ENCODE measurements at regions of chr2 and their contacts with region 1.

Region 1: DNA sequence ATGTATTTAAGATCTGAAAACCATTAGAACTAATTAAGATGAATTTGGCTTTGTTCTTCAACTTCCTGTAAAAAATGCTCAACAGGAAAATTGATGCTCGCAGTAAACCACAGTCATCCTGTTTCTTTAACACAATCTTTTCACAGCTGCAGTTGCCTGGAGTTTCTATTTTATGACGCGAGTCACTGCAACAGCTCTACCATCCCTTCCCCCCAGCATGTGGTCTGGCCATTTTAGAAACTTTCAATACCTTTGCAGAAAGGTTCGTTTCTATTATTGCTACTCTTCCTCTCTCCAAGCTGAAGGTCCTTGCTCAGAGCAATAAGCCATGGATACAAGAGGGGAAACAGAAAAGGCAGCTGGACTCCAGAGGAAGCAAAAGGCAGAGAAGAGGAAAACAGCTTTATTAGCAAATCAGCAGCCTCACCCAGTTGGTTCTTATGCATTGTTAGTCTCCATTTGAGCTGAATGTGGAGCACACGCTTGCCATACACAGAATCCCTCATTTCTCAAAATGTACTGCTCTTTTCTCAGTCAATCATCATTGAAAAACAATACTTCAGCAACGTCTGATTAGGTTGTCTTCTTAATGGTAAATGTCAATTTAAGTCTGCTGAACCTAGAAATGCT is 3.9 kb downstream of the WIPF1 start:
- DNase-seq: peak; percentile 80
- ATAC-seq: peak; percentile 67
- H3K4me3 Mint-ChIP-seq: peak overlapping the region; percentile 70
- H3K27ac Mint-ChIP-seq: peak overlapping the region; percentile 97
- H3K4me1 Mint-ChIP-seq: peaks cover 63% of the 10 kb centered on the region
- H3K27me3 Mint-ChIP-seq: no peaks in the 10 kb centered on the region

Region 2: GRCh38 chr2:174492963-174493431 is 100.7 kb before region 1 on chr2:
- CTCF ChIA-PET with region 1: interaction called, 4 read pairs
- POLR2A ChIA-PET with region 1: interaction called, 3 read pairs
- intact Hi-C with region 1: loop called in 1 of 2 experiments (anchors 2 kb)
- DNase-seq: peak; percentile 75
- ATAC-seq: peak; percentile 81
- H3K4me3 Mint-ChIP-seq: peak overlapping the region; percentile 72
- H3K27ac Mint-ChIP-seq: peak overlapping the region; percentile 95
- H3K4me1 Mint-ChIP-seq: peaks cover 79% of the 10 kb centered on the region
- H3K27me3 Mint-ChIP-seq: no peaks in the 10 kb centered on the region

Region 3: GRCh38 chr2:174610243-174610995 is 16.7 kb after region 1 on chr2:
- CTCF ChIA-PET with region 1: interaction called, 13 read pairs
- POLR2A ChIA-PET with region 1: interaction called, 9 read pairs
- intact Hi-C with region 1: loop called (anchors 1 kb)
- DNase-seq: no peak
- ATAC-seq: no peak
- H3K4me3 Mint-ChIP-seq: peak overlapping the region; percentile 28
- H3K27ac Mint-ChIP-seq: peak overlapping the region; percentile 99
- H3K4me1 Mint-ChIP-seq: peaks cover 93% of the 10 kb centered on the region
- H3K27me3 Mint-ChIP-seq: no peaks in the 10 kb centered on the region

Region 4: DNA sequence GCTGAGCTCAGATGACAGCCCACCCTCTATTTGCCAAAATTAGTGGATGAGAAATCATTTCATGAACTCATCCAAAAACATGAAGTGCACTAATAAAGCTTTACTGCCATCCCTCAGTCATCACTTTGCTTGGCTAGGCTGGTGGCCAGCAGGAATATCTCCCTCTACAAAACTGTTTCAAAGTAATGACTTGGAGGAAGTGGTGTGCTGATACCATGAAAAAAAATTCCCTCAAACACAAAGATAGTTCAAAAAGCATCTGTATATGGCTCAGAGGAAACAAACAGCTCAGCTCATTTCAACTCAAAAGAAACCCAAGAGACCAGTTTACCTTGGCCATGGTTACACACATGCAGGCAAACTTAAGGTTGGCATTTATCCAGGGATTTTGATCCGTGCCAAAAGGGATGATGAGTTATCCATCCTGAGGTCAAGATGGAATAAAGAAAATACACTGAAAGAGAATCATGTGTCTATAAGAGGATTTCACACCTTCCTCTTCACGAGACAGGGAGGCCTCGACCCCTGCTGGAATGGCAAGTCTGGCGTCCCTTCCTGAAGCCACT is 22.3 kb after region 1 on chr2:
- CTCF ChIA-PET with region 1: interaction called, 13 read pairs
- POLR2A ChIA-PET with region 1: interaction called, 5 read pairs
- intact Hi-C with region 1: no loop called
- DNase-seq: no peak
- ATAC-seq: peak; percentile 67
- H3K4me3 Mint-ChIP-seq: peak overlapping the region; percentile 17
- H3K27ac Mint-ChIP-seq: peak overlapping the region; percentile 88
- H3K4me1 Mint-ChIP-seq: peaks cover 88% of the 10 kb centered on the region
- H3K27me3 Mint-ChIP-seq: no peaks in the 10 kb centered on the region

Region 5: DNA sequence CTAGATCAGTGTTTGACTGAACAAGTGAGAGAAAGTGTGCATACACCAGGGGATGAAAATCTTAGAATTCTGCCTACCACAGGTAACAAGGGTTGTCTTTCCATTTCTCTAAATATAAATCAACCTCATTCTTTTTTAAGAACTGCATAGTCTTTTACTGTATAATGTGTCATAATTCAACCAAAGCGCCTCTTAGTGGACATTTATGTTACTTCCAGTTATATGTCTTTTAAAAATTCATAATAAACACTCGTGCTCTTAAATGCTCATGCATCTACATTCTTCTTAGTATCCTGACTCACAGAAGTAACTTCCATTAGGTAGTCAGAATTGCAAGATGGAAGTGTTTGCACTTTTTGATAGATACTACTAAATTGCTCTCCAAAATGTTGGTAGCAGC is 94.4 kb after region 1 on chr2:
- CTCF ChIA-PET with region 1: interaction called, 28 read pairs
- POLR2A ChIA-PET with region 1: interaction called, 3 read pairs
- intact Hi-C with region 1: no loop called
- DNase-seq: no peak
- ATAC-seq: peak; percentile 70
- H3K4me3 Mint-ChIP-seq: no peak overlapping the region
- H3K27ac Mint-ChIP-seq: no peak overlapping the region
- H3K4me1 Mint-ChIP-seq: peaks cover 19% of the 10 kb centered on the region
- H3K27me3 Mint-ChIP-seq: no peaks in the 10 kb centered on the region

Region 6: GRCh38 chr2:174729797-174730697 is 136.4 kb after region 1 on chr2:
- CTCF ChIA-PET with region 1: no interaction called
- POLR2A ChIA-PET with region 1: no interaction called
- intact Hi-C with region 1: no loop called
- DNase-seq: peak; percentile 71
- ATAC-seq: peak; percentile 90
- H3K4me3 Mint-ChIP-seq: peak overlapping the region; percentile 72
- H3K27ac Mint-ChIP-seq: peak overlapping the region; percentile 53
- H3K4me1 Mint-ChIP-seq: peaks cover 12% of the 10 kb centered on the region
- H3K27me3 Mint-ChIP-seq: peaks cover 6% of the 10 kb centered on the region

Measured in activated CD4-positive, alpha-beta T cell treated with anti-CD3 and anti-CD28 coated beads for 36 hours (primary cell).